Posterior vena cava (tissue), 2 donors: ENCODE measurements at regions of chr4 and their contacts with region 1.

Region 1: DNA sequence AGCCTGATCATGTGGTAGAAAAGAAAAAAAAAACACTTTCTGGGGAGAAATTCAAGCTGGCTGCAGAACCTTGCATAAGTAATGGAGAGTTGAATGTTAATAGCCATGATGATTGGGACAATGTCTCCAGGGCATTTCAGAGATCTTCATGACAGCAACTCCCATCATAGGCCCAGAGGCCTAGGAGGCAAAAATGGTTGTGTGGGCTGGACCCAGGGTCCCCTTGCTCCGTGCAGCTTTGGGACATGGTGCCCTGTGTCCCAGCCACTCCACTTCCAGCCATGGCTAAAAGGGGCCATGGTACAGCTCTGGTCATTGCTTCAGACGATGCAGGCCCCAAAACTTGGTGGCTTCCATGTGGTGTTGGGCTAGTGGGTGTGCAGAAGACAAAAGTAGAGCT is 1170.9 kb downstream of the C4orf33 start:
- DNase-seq: no peak

Region 2: GRCh38 chr4:130288576-130288975 is 21.8 kb after region 1 on chr4:
- intact Hi-C with region 1: loop called in 1 of 2 experiments (anchors 2 kb)
- DNase-seq: no peak